ENCODE measurements at regions of chr5 and their contacts with region 1.

Region 1: DNA sequence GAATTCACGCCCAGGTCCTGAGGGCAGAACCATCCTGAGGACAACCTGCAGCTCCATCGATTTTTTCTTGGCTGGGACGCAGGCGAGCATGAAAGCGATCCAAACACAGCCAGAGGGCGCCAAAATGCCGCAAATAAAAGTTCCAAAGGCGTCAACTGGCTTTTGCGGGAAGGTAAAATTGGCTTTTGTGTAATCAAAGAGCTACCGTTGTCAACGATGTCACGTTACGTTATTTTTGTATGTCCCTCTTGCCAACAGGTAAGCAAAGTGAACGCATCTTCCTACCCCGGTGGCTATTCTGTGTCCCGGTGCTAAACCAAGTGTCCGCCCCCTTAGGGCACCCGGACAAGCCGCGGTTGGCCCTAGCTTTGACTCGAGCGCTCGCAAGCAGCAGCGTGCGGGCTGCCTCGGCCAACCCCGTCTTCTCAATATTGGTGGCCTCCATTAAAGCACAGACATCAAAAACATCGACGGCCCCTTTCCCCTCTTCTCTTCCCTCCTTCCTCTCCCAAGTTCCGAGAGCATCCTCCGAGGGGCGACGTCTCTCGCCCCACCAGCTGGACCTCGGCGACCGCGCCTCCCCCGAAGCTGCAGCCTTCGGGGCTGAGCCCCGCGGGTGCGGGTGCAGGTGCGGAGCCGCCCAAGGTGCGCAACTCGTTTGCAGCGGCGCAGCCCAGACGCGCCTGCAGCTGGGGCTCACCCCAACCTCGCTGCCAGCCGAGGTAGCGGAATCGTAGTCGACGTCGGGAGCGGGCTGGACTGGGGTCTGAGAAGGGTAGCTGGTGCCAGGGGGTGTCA is 1.1 kb upstream of the BASP1 start:
- DNase-seq: peak; percentile 81

Region 2: DNA sequence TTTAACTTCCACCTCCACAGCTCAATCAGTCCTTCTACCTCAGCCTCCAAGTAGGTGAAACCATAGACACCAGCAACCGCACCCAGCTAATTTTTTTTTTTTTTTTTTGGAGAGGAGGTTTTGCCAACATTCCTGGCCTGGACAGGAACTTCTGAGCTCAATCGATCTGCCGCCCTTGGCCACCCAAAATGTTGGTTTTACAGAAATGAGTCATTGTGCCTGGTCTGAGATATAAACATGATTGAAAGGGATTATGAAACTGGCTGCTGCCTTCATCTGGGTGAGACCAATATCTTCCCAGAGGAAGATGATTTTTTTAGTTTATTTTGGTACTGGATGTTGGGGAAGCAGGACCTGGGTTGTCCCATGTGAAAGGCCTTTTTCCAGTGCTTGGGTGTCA is 403.0 kb after region 1 on chr5:
- in situ Hi-C with region 1: no loop called
- DNase-seq: no peak

Region 3: GRCh38 chr5:18281682-18282557 is 1065.5 kb after region 1 on chr5:
- in situ Hi-C with region 1: loop called (anchors 25 kb)
- DNase-seq: peak; percentile 26

Measured in KBM-7 (cell line).